Activated CD4-positive, alpha-beta T cell treated with anti-CD3 and anti-CD28 coated beads for 36 hours (primary cell): ENCODE measurements at regions of chr3 and their contacts with region 1.

Region 1: GRCh38 chr3:87792534-87793336 is 266.1 kb downstream of the CGGBP1 start:
- DNase-seq: peak; percentile 28
- ATAC-seq: peak; percentile 55
- H3K4me3 Mint-ChIP-seq: peak within 1 kb of the TSS; percentile 51
- H3K27ac Mint-ChIP-seq: no peak within 1 kb of the TSS
- H3K4me1 Mint-ChIP-seq: peaks cover 29% of the 10 kb centered on the region
- H3K27me3 Mint-ChIP-seq: peaks cover 46% of the 10 kb centered on the region

Region 2: DNA sequence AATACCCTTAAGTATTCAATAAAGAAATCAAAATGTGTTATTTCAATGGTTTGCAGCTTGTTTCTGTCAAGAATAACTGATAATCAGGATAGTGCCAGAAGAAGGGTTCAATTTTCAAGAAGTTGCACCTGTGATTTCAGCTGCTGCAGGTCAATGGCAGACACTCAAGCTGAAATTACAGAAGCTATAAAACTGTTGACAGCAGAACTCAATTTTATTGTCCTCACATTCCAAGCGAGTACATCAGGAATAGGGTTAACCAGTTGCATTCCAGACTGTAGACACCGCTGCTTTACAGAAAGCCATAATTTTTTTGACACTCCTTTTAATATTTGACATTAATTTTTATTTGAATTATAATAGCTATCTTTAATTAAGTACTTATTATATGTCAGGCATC is 98.1 kb before region 1 on chr3:
- CTCF ChIA-PET with region 1: no interaction called
- POLR2A ChIA-PET with region 1: no interaction called
- intact Hi-C with region 1: no loop called
- DNase-seq: no peak
- ATAC-seq: no peak
- H3K4me3 Mint-ChIP-seq: no peak overlapping the region
- H3K27ac Mint-ChIP-seq: no peak overlapping the region
- H3K4me1 Mint-ChIP-seq: no peaks in the 10 kb centered on the region
- H3K27me3 Mint-ChIP-seq: no peaks in the 10 kb centered on the region

Region 3: DNA sequence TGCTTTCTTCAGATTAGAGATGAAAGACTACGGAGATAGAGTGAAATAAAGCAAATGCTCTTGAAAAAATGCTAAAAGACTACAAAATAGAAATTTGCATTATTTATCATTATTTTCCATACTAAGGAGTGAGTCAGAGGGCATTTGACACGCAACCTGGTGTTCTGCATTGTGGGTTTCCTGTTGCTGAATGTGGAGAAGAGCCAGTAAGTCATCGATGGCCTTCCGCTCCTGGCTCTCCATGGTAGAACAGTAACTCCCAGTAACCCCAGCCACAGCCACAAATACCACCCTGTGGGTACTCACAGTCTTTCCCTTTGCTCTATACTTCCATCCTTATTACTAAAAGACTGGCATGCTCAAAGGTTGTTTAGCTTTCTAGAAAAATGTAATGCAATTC is 204.6 kb after region 1 on chr3:
- CTCF ChIA-PET with region 1: no interaction called
- POLR2A ChIA-PET with region 1: no interaction called
- intact Hi-C with region 1: loop called in 1 of 2 experiments (anchors 10 kb)
- DNase-seq: peak; percentile 75
- ATAC-seq: peak; percentile 89
- H3K4me3 Mint-ChIP-seq: peak overlapping the region; percentile 19
- H3K27ac Mint-ChIP-seq: no peak overlapping the region
- H3K4me1 Mint-ChIP-seq: peaks cover 19% of the 10 kb centered on the region
- H3K27me3 Mint-ChIP-seq: no peaks in the 10 kb centered on the region